Activated naive CD4-positive, alpha-beta T cell treated with anti-CD3 and anti-CD28 coated beads for 36 hours (primary cell): ENCODE measurements at regions of chr13 and their contacts with region 1.

Region 1: DNA sequence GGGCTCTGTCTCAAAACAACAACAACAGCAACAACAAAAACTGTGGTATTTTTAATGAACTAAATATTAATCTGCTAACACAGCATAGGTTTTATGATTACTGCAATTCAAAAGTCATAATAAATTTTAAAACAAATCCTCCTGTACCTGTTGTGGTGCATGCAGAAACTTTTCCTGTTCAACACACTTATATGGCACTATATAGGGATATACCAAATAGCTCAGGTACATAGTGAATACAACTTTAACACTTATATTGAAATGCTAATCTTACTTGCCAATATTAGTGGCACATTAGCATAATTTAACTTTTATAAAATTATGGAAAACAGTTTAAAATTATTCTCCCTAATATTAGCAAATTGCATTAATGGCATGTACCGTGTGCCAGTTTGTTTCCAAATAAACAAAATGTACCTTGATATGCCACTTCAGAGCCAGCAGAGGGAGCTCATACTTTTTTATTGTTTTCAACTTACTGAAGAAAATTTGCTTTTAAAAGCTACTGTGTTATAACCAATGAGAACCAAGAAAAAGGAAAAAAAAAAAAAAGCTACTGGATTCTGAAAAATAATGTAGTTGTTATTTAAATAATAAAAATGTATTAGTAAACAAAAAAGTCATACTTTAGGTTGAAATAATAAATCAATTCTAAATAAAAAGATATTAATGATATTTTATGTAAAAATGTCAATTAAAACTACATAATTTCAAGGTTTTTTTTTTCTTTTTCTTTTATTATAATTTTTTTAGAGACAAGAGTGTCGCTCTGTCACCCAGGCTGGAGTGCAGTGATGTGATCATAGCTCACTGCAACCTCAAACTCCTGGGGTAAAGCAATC is 18.0 kb upstream of the RBM26 start:
- DNase-seq: no peak
- H3K4me3 Mint-ChIP-seq: no peak overlapping the region
- H3K27ac Mint-ChIP-seq: no peak overlapping the region
- H3K4me1 Mint-ChIP-seq: peaks cover 3% of the 10 kb centered on the region
- H3K27me3 Mint-ChIP-seq: no peaks in the 10 kb centered on the region

Region 2: DNA sequence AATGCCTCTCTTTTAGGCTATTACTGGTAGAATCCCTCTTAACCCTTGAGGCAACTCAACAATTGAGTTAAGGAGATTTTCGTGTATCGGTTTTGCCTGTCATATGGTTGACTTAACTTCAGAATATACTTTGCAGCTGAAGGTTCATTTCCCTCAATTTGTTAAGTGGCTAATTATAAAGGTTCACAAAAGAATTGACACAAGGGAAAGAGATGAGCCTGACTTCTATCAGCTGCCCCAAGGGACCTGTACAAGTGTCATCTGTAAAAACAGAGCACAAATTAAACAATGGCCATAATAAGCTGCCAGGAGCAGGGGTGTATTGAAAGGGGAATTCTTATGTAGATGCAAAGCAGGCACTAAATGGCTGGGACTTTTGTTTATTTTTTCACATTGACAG is 430.2 kb before region 1 on chr13:
- CTCF ChIA-PET with region 1: no interaction called
- intact Hi-C with region 1: no loop called
- DNase-seq: no peak
- H3K4me3 Mint-ChIP-seq: no peak overlapping the region
- H3K27ac Mint-ChIP-seq: no peak overlapping the region
- H3K4me1 Mint-ChIP-seq: no peaks in the 10 kb centered on the region
- H3K27me3 Mint-ChIP-seq: peaks cover 9% of the 10 kb centered on the region

Region 3: GRCh38 chr13:79034341-79034740 is 389.7 kb before region 1 on chr13:
- CTCF ChIA-PET with region 1: no interaction called
- intact Hi-C with region 1: no loop called
- DNase-seq: no peak
- H3K4me3 Mint-ChIP-seq: no peak overlapping the region
- H3K27ac Mint-ChIP-seq: no peak overlapping the region
- H3K4me1 Mint-ChIP-seq: no peaks in the 10 kb centered on the region
- H3K27me3 Mint-ChIP-seq: peaks cover 11% of the 10 kb centered on the region

Region 4: DNA sequence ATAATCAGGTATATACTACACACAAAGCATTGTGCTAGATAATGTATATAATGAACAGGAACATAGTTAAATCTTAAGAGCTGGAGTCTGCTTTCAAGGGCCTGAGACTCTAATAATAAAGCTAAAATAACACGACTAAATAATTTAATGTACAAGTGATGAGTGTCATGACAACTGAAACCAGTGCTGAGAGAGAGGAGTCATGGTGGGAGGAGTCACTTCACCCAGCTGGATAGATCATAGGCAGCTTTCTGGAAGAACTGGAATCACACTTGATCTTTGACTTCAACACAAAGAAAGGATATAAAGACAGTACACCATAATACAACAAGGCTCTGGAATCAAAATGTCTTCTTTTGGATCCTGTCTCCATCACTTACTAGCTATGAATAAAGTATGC is 25.1 kb before region 1 on chr13:
- CTCF ChIA-PET with region 1: interaction called, 16 read pairs
- intact Hi-C with region 1: no loop called
- DNase-seq: peak; percentile 44
- H3K4me3 Mint-ChIP-seq: no peak overlapping the region
- H3K27ac Mint-ChIP-seq: peak overlapping the region; percentile 44
- H3K4me1 Mint-ChIP-seq: peaks cover 71% of the 10 kb centered on the region
- H3K27me3 Mint-ChIP-seq: no peaks in the 10 kb centered on the region

Region 5: GRCh38 chr13:79451500-79451962 is 27.5 kb after region 1 on chr13:
- CTCF ChIA-PET with region 1: interaction called, 21 read pairs
- intact Hi-C with region 1: no loop called
- DNase-seq: peak; percentile 97
- H3K4me3 Mint-ChIP-seq: peak overlapping the region; percentile 68
- H3K27ac Mint-ChIP-seq: peak overlapping the region; percentile 93
- H3K4me1 Mint-ChIP-seq: peaks cover 62% of the 10 kb centered on the region
- H3K27me3 Mint-ChIP-seq: no peaks in the 10 kb centered on the region

Region 6: GRCh38 chr13:79528759-79529191 is 104.8 kb after region 1 on chr13:
- CTCF ChIA-PET with region 1: interaction called, 24 read pairs
- intact Hi-C with region 1: no loop called
- DNase-seq: no peak
- H3K4me3 Mint-ChIP-seq: no peak overlapping the region
- H3K27ac Mint-ChIP-seq: no peak overlapping the region
- H3K4me1 Mint-ChIP-seq: peaks cover 20% of the 10 kb centered on the region
- H3K27me3 Mint-ChIP-seq: no peaks in the 10 kb centered on the region

Region 7: DNA sequence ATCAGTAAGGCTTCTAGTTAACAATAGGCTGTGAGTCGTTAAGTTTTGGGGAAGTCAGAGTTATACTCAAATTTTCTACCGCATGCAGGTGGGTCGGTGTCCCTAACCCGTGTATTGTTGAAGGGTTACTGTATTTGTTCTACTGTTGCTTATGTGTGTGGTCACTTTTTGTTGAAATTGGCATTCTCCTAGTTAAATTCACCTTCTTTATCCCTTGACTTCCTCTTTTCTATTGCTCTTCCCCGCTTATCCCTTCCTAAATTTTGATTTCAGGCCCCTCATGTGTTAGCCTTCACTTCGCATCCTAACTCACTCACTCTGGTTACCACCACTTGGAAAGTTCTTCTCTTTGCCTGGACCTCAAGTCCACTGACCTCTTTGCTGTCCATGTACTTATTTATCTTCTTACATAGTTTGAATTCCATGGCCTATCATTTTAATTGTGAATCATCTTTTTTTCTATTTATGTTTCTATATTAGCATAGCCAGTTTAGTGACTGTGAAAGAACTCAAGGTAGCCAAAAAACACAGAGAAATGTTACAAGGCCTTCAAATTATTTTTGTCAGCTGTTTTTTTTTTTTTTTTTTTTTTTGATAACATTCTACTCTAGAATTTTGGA is 109.9 kb after region 1 on chr13:
- CTCF ChIA-PET with region 1: interaction called, 159 read pairs
- intact Hi-C with region 1: no loop called
- DNase-seq: no peak
- H3K4me3 Mint-ChIP-seq: no peak overlapping the region
- H3K27ac Mint-ChIP-seq: no peak overlapping the region
- H3K4me1 Mint-ChIP-seq: peaks cover 33% of the 10 kb centered on the region
- H3K27me3 Mint-ChIP-seq: no peaks in the 10 kb centered on the region

Region 8: GRCh38 chr13:79541426-79542049 is 117.5 kb after region 1 on chr13:
- CTCF ChIA-PET with region 1: interaction called, 159 read pairs
- intact Hi-C with region 1: loop called (anchors 1 kb)
- DNase-seq: no peak
- H3K4me3 Mint-ChIP-seq: no peak overlapping the region
- H3K27ac Mint-ChIP-seq: no peak overlapping the region
- H3K4me1 Mint-ChIP-seq: peaks cover 5% of the 10 kb centered on the region
- H3K27me3 Mint-ChIP-seq: no peaks in the 10 kb centered on the region

Region 9: GRCh38 chr13:79679334-79679733 is 255.3 kb after region 1 on chr13:
- CTCF ChIA-PET with region 1: interaction called, 3 read pairs
- intact Hi-C with region 1: loop called (anchors 5 kb)
- DNase-seq: peak; percentile 64
- H3K4me3 Mint-ChIP-seq: no peak overlapping the region
- H3K27ac Mint-ChIP-seq: no peak overlapping the region
- H3K4me1 Mint-ChIP-seq: no peaks in the 10 kb centered on the region
- H3K27me3 Mint-ChIP-seq: peaks cover 3% of the 10 kb centered on the region